Common myeloid progenitor, CD34-positive (primary cell): ENCODE measurements at regions of chr7 and their contacts with region 1.

Region 1: DNA sequence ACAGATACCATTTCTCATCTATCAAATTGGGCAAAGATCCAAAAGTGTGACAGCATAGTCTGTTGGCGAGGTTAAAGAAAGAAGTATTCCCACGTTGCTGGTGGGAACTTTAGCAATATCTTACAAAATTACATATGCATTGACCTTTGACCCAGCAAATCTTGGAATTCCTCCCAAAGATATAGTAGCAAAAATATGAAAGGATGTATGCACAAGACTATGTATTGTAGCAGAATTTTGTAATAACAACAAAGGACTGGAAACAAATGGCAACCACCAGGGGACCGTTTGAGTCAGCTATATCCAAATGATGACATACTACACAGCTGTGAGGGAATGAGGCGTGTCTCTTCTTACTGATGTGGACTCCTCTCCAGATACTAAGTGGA is 50.2 kb downstream of the KCNH2 start:
- DNase-seq: peak in 2 of 3 donors; percentile 39 to 49
- H3K4me3 ChIP-seq: no peak overlapping the region
- H3K27ac ChIP-seq: no peak overlapping the region
- H3K4me1 ChIP-seq: peaks cover 0 to 28% (median 21%) of the 10 kb centered on the region in 4 experiments
- H3K27me3 ChIP-seq: no peaks in the 10 kb centered on the region

Region 2: GRCh38 chr7:150898475-150899011 is 29.4 kb before region 1 on chr7:
- CTCF ChIA-PET with region 1: interaction called, 20 read pairs
- POLR2A ChIA-PET with region 1: interaction called, 3 read pairs
- DNase-seq: peak; percentile 60 to 68 (median 64)
- H3K4me3 ChIP-seq: no peak overlapping the region
- H3K27ac ChIP-seq: no peak overlapping the region
- H3K4me1 ChIP-seq: peaks cover 0 to 21% (median 11%) of the 10 kb centered on the region in 4 experiments
- H3K27me3 ChIP-seq: peaks cover 0 to 35% (median 19%) of the 10 kb centered on the region in 5 experiments

Region 3: DNA sequence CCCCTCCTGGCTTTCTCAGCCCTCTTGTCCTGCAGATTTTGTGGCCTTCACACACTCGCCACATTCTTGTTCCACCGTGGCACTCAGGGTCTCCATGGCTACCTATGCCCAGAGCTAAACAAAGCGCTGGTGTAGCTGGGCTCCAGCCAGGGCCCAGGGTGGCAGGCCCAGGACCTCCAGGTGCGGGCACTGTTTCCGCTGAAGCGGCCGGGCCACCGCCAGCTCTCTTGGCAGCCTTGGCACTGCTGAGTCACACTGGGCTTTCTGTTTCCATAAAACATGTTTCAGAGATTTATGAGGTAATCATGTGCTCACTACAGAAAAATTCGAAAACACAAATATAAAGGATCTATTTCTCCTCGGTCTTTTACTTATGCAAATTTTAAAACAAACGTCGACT is 24.3 kb before region 1 on chr7:
- CTCF ChIA-PET with region 1: interaction called, 20 read pairs
- POLR2A ChIA-PET with region 1: interaction called, 3 read pairs
- DNase-seq: peak; percentile 89 to 98 (median 97)
- H3K4me3 ChIP-seq: peak overlapping the region in 3 of 7 experiments; percentile 13 to 31 (median 19)
- H3K27ac ChIP-seq: peak overlapping the region in 1 of 2 experiments; percentile 63
- H3K4me1 ChIP-seq: peaks cover 0 to 37% (median 20%) of the 10 kb centered on the region in 4 experiments
- H3K27me3 ChIP-seq: peaks cover 0 to 7% (median 6%) of the 10 kb centered on the region in 5 experiments

Region 4: GRCh38 chr7:150972023-150972468 is 44.1 kb after region 1 on chr7:
- CTCF ChIA-PET with region 1: no interaction called
- POLR2A ChIA-PET with region 1: no interaction called
- DNase-seq: no peak
- H3K4me3 ChIP-seq: no peak overlapping the region
- H3K27ac ChIP-seq: no peak overlapping the region
- H3K4me1 ChIP-seq: peaks cover 0 to 19% (median 14%) of the 10 kb centered on the region in 4 experiments
- H3K27me3 ChIP-seq: peaks cover 0 to 75% (median 45%) of the 10 kb centered on the region in 5 experiments

Region 5: DNA sequence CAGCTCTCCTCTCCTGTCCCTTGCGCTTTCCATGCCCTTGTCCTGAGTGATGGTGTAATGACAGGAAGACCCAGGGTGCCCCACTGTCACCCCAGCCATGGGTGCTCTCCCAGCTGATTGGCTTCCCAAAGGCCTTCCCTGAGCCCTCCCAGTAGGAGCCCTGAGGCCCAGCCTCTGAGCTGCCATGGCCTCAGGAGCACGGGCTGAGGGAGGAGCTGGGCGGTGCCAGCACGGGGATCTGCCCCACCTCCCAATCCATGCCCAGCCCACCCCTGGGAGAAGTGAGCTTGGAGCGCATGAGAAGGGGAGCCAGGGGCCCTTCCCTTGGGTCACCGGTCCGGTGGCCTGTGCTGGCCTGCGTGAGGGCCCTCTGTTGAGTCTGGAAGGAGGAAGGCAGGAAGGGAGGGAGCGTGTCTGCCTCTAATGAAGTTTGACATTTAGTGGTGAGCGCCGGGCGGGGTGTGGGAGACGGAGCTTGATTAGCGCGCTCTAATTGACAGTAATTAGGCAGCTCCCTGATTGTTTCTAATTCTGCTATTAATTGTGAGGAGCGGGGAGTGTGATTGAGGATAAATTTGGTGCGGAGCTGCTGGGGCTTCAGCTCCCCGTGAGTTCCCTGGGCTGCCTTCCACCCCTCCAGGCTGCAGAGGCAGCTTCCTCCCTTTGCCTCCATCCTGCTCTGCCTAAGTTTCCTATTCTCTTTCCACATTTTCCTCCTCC is 211.3 kb after region 1 on chr7:
- CTCF ChIA-PET with region 1: no interaction called
- POLR2A ChIA-PET with region 1: no interaction called
- DNase-seq: no peak
- H3K4me3 ChIP-seq: no peak overlapping the region
- H3K27ac ChIP-seq: no peak overlapping the region
- H3K4me1 ChIP-seq: peaks cover 0 to 2% (median under 1%) of the 10 kb centered on the region in 4 experiments
- H3K27me3 ChIP-seq: no peaks in the 10 kb centered on the region